ENCODE measurements at regions of chr2 and their contacts with region 1.

Region 1: GRCh38 chr2:64865073-64865830 is 123.9 kb upstream of the SLC1A4 start:
- DNase-seq: peak; percentile 39 to 84 (median 55)
- ATAC-seq: peak; percentile 91
- H3K4me3 ChIP-seq: peak overlapping the region; percentile 61 to 76
- H3K4me3 Mint-ChIP-seq: peak overlapping the region; percentile 81
- H3K27ac ChIP-seq: no peak overlapping the region
- H3K27ac Mint-ChIP-seq: no peak overlapping the region
- H3K4me1 ChIP-seq: peaks cover 13% of the 10 kb centered on the region
- H3K4me1 Mint-ChIP-seq: no peaks in the 10 kb centered on the region
- H3K27me3 ChIP-seq: peaks cover 0 to 2% of the 10 kb centered on the region in 2 experiments
- H3K27me3 Mint-ChIP-seq: peaks cover 4% of the 10 kb centered on the region
- CTCF ChIP-seq: peak; percentile 80

Region 2: GRCh38 chr2:64045938-64046337 is 819.3 kb before region 1 on chr2:
- CTCF ChIA-PET with region 1: no interaction called
- POLR2A ChIA-PET with region 1: no interaction called
- intact Hi-C with region 1: loop called in 1 of 2 experiments (anchors 5 kb)
- DNase-seq: no peak
- ATAC-seq: no peak
- H3K4me3 ChIP-seq: no peak overlapping the region
- H3K4me3 Mint-ChIP-seq: no peak overlapping the region
- H3K27ac ChIP-seq: no peak overlapping the region
- H3K27ac Mint-ChIP-seq: no peak overlapping the region
- H3K4me1 ChIP-seq: peaks cover 7% of the 10 kb centered on the region
- H3K4me1 Mint-ChIP-seq: peaks cover 10% of the 10 kb centered on the region
- H3K27me3 ChIP-seq: no peaks in the 10 kb centered on the region
- H3K27me3 Mint-ChIP-seq: no peaks in the 10 kb centered on the region
- CTCF ChIP-seq: no peak

Region 3: DNA sequence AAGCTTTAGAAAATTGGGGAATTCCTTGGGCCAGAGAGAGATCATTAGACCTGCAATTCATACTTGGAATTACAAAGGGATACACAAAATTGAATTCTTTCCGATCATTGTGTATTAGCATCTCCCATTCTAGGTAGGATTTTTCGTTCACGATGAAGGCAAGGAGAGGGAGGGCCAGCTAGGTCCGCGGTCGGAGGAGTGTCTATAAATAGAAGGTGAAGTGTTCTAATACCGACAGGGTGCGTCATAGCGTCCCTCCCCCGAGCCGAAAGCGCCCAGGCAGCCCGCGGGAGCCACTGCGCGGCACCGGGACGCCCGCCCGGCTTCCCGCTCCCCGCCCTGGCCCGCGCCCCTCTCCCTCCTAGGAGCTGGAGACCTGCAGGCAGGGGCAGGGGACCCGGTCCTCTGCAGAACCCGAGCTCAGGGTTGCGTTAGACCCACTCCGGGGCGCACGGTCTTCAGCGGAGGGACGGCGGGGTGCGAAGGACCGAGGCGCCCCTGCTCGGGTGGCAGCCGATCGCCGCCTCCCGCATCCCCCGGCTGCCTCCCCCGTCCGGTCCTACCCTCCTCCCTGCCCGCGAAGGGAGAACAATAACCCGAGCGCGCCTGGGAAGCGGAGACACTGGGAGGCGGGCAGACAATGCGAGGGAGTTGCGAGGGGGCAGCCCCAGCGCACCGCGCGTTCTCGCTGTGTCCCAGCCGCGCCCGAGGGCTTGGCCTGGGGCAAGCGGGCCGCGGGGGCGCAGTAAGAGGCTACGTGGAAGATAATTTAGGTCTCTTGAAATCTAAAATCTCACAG is 97.4 kb before region 1 on chr2:
- CTCF ChIA-PET with region 1: no interaction called
- POLR2A ChIA-PET with region 1: no interaction called
- intact Hi-C with region 1: loop called in 1 of 2 experiments (anchors 1 kb)
- DNase-seq: peak; percentile 45 to 90 (median 74)
- ATAC-seq: peak; percentile 74
- H3K4me3 ChIP-seq: peak overlapping the region; percentile 66 to 68
- H3K4me3 Mint-ChIP-seq: peak overlapping the region; percentile 92
- H3K27ac ChIP-seq: peak overlapping the region; percentile 61 to 88
- H3K27ac Mint-ChIP-seq: peak overlapping the region; percentile 93
- H3K4me1 ChIP-seq: peaks cover 11% of the 10 kb centered on the region
- H3K4me1 Mint-ChIP-seq: peaks cover 16% of the 10 kb centered on the region
- H3K27me3 ChIP-seq: no peaks in the 10 kb centered on the region
- H3K27me3 Mint-ChIP-seq: no peaks in the 10 kb centered on the region
- CTCF ChIP-seq: no peak

Region 4: GRCh38 chr2:64797881-64798575 is 67.2 kb before region 1 on chr2:
- CTCF ChIA-PET with region 1: no interaction called
- POLR2A ChIA-PET with region 1: no interaction called
- intact Hi-C with region 1: no loop called
- DNase-seq: no peak
- ATAC-seq: no peak
- H3K4me3 ChIP-seq: no peak overlapping the region
- H3K4me3 Mint-ChIP-seq: no peak overlapping the region
- H3K27ac ChIP-seq: no peak overlapping the region
- H3K27ac Mint-ChIP-seq: no peak overlapping the region
- H3K4me1 ChIP-seq: no peaks in the 10 kb centered on the region
- H3K4me1 Mint-ChIP-seq: no peaks in the 10 kb centered on the region
- H3K27me3 ChIP-seq: no peaks in the 10 kb centered on the region
- H3K27me3 Mint-ChIP-seq: no peaks in the 10 kb centered on the region
- CTCF ChIP-seq: no peak